OCI-LY7 (cell line): ENCODE measurements at regions of chr1 and their contacts with region 1.

Region 1: DNA sequence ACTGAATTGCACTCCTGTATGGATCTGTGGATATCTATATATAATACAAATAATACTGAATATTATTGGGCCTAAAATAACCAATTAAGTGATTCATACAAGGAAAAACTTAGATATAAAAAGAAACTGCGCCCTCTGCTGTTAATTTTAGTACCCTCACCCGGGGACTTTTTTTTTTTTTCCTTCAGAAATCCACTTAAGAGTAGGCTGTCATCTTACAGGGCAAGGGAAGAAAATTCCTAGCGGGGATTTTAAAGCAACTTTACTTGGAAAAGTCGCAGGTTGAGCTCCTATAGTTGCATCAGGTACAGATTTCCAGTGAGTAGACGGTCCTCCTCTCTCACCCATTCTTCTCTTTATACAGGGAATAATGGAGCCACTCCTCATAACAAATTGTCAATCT is 1.3 kb downstream of the NTNG1 start:
- DNase-seq: peak; percentile 68
- H3K4me3 ChIP-seq: peak overlapping the region; percentile 78
- H3K27ac ChIP-seq: no peak overlapping the region
- H3K4me1 ChIP-seq: peaks cover 16% of the 10 kb centered on the region
- CTCF ChIP-seq: peak; percentile 93

Region 2: DNA sequence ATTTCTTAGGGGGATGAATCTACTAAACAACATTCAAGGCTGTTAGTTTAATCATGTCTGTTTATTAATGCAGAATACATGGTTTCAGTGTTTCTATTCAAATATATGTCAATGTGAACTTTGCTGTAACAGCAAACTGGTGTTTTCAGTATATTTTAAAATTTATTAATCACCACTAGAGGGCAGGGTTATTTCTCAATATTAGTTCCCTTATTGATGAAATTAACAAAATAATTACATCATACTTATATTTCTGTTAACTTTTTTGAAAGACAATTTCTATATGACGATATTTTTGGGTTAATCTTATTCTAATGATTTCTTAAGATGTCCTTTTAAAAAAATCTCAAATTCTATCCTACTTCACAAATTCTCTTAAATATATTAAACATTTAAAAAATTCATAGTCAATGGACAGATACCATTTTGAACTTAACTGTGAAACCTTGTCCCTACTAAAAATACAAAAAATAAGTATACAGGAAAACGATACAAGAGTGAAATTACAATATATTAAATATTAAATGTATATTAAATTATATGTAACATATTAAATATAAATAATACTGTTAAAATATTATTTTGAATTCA is 1119.7 kb before region 1 on chr1:
- CTCF ChIA-PET with region 1: no interaction called
- POLR2A ChIA-PET with region 1: no interaction called
- intact Hi-C with region 1: loop called (anchors 5 kb)
- DNase-seq: peak; percentile 23
- H3K4me3 ChIP-seq: no peak overlapping the region
- H3K27ac ChIP-seq: no peak overlapping the region
- H3K4me1 ChIP-seq: no peaks in the 10 kb centered on the region
- CTCF ChIP-seq: peak; percentile 81

Region 3: DNA sequence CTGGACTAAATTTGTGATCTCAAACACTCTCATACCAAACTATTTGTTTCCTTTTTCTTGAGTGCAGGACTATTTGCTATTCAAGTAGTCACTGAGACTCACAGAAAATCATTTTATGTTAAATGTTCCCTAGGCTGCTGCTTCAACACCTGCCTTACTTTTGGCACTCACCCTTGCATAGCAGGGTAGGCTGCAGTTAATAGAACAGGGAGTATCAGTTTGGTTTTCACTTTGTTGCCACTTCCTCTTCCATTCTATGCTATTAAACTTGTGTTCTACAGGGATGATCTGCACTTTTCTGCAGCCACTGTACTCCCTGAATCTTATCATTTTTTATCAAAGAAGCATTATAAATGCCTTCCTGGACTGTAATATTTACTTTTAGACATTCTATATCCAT is 234.3 kb before region 1 on chr1:
- CTCF ChIA-PET with region 1: no interaction called
- POLR2A ChIA-PET with region 1: no interaction called
- intact Hi-C with region 1: loop called (anchors 5 kb)
- DNase-seq: peak; percentile 88
- H3K4me3 ChIP-seq: peak overlapping the region; percentile 46
- H3K27ac ChIP-seq: peak overlapping the region; percentile 95
- H3K4me1 ChIP-seq: peaks cover 28% of the 10 kb centered on the region
- CTCF ChIP-seq: no peak

Region 4: GRCh38 chr1:107056426-107057196 is 85.5 kb before region 1 on chr1 and contains the start of gene PRMT6:
- CTCF ChIA-PET with region 1: interaction called, 3 read pairs
- POLR2A ChIA-PET with region 1: interaction called, 4 read pairs
- intact Hi-C with region 1: loop called (anchors 2 kb)
- DNase-seq: peak; percentile 89
- H3K4me3 ChIP-seq: peak within 1 kb of the TSS; percentile 83
- H3K27ac ChIP-seq: peak within 1 kb of the TSS; percentile 54
- H3K4me1 ChIP-seq: peaks cover 21% of the 10 kb centered on the region
- CTCF ChIP-seq: peak; percentile 37; the same call in 1 of the 2 replicates
- total RNA-seq, gene PRMT6: 41.7 and 42.5 TPM in 2 replicates

Region 5: GRCh38 chr1:107196973-107197562 is 54.9 kb after region 1 on chr1:
- CTCF ChIA-PET with region 1: no interaction called
- POLR2A ChIA-PET with region 1: no interaction called
- intact Hi-C with region 1: loop called (anchors 10 kb)
- DNase-seq: peak; percentile 84
- H3K4me3 ChIP-seq: no peak overlapping the region
- H3K27ac ChIP-seq: no peak overlapping the region
- H3K4me1 ChIP-seq: peaks cover 4% of the 10 kb centered on the region
- CTCF ChIP-seq: peak; percentile 98

Region 6: GRCh38 chr1:107246775-107247345 is 104.7 kb after region 1 on chr1:
- CTCF ChIA-PET with region 1: no interaction called
- POLR2A ChIA-PET with region 1: interaction called, 4 read pairs
- intact Hi-C with region 1: loop called (anchors 5 kb)
- DNase-seq: peak; percentile 37
- H3K4me3 ChIP-seq: peak overlapping the region; percentile 9
- H3K27ac ChIP-seq: peak overlapping the region; percentile 61
- H3K4me1 ChIP-seq: peaks cover 61% of the 10 kb centered on the region
- CTCF ChIP-seq: no peak

Region 7: GRCh38 chr1:107529502-107530149 is 387.5 kb after region 1 on chr1:
- CTCF ChIA-PET with region 1: interaction called, 3 read pairs
- POLR2A ChIA-PET with region 1: interaction called, 3 read pairs
- intact Hi-C with region 1: loop called (anchors 5 kb)
- DNase-seq: peak; percentile 74
- H3K4me3 ChIP-seq: no peak overlapping the region
- H3K27ac ChIP-seq: no peak overlapping the region
- H3K4me1 ChIP-seq: peaks cover 4% of the 10 kb centered on the region
- CTCF ChIP-seq: peak; percentile 97

Region 8: GRCh38 chr1:107547363-107548155 is 405.4 kb after region 1 on chr1:
- CTCF ChIA-PET with region 1: no interaction called
- POLR2A ChIA-PET with region 1: no interaction called
- intact Hi-C with region 1: no loop called
- DNase-seq: no peak
- H3K4me3 ChIP-seq: no peak overlapping the region
- H3K27ac ChIP-seq: no peak overlapping the region
- H3K4me1 ChIP-seq: no peaks in the 10 kb centered on the region
- CTCF ChIP-seq: no peak